A673 (cell line): ENCODE measurements at regions of chr1 and their contacts with region 1.

Region 1: DNA sequence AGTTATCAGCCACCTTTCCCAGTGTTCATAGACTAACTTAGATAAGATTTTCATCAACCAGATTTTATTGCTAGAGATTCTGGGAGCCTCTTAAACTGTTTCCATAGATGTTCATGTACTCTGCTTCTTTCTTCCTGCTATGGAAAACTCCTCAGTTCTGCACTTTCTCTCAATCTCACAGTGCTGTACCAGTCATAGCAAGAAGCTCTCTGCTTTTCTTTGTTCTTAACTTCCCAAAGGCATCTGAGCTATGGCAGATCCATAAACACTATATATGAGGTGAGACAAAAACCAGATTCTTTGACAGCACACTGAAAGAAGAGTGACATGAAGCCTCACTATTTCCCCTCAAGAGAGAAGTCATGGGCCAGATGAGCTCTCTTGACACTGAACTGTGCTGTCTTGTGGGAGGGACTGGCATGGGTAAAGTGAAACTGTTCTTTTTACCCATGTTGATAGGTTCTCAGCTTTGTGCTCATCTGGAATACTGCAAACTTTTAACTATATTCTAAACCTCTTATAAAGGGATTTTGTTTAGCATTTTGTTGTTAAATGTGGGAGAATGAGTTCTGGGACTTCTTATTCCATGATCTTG is 64.2 kb upstream of the LYPLAL1 start:
- DNase-seq: no peak
- H3K4me3 ChIP-seq: no peak overlapping the region
- H3K27ac ChIP-seq: no peak overlapping the region
- H3K4me1 ChIP-seq: no peaks in the 10 kb centered on the region
- H3K27me3 ChIP-seq: no peaks in the 10 kb centered on the region
- CTCF ChIP-seq: no peak

Region 2: GRCh38 chr1:218742467-218743260 is 366.9 kb before region 1 on chr1:
- CTCF ChIA-PET with region 1: no interaction called
- POLR2A ChIA-PET with region 1: no interaction called
- intact Hi-C with region 1: no loop called
- DNase-seq: no peak
- H3K4me3 ChIP-seq: no peak overlapping the region
- H3K27ac ChIP-seq: no peak overlapping the region
- H3K4me1 ChIP-seq: no peaks in the 10 kb centered on the region
- H3K27me3 ChIP-seq: peaks cover 20% of the 10 kb centered on the region
- CTCF ChIP-seq: no peak

Region 3: DNA sequence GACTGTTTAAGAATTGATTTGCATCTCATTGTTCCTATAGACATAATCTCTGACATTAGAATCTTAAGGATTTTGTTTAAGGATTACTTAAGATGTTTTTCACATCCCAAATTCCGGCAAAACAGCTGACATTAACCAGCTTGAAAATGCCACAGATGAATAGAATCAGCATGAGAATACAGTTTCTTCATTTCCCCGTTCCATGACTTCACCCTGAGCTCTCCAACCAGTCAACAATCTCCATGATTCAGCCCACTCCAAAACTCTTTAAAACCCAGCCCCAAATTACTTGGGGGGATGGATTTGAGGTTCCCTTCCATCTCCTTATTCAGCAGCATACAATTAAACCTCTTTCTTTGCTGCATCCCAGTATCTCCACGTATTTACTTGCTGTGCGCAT is 265.1 kb after region 1 on chr1:
- CTCF ChIA-PET with region 1: interaction called, 13 read pairs
- POLR2A ChIA-PET with region 1: no interaction called
- intact Hi-C with region 1: no loop called
- DNase-seq: no peak
- H3K4me3 ChIP-seq: no peak overlapping the region
- H3K27ac ChIP-seq: no peak overlapping the region
- H3K4me1 ChIP-seq: peaks cover 15% of the 10 kb centered on the region
- H3K27me3 ChIP-seq: peaks cover 4% of the 10 kb centered on the region
- CTCF ChIP-seq: no peak